Heart right ventricle (tissue), 16 donors: ENCODE measurements at regions of chr2 and their contacts with region 1.

Region 1: GRCh38 chr2:154623819-154624218 is 74.7 kb upstream of the KCNJ3 start:
- DNase-seq: peak in 1 of 2 donors; percentile 20
- ATAC-seq: peak in 2 of 8 donors; percentile 46 to 56
- H3K4me3 ChIP-seq: no peak overlapping the region
- H3K27ac ChIP-seq: no peak overlapping the region
- H3K4me1 ChIP-seq: peaks cover 0 to 5% (median 0%) of the 10 kb centered on the region in 9 donors
- H3K27me3 ChIP-seq: no peaks in the 10 kb centered on the region
- CTCF ChIP-seq: peak; percentile 38 to 77 (median 61)

Region 2: DNA sequence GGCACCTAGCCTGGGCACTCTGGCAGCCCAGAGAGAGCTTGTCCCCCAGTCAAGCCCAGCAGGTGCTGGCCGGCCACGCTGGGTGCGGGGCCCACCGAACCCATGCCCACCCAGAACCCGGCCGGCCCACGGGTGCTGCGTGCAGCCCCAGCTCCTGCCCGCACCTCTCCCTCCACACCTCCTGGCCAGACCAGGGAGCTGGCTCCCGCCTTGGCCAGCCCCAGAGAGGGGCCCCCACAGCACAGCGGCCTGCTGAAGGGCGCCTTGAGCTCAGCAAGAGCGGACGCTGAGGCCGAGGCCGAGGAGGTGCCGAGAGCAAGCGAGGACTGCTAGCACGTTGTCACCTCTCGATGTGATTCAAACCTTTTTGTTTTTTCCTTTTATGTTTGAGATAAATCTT is 332.3 kb before region 1 on chr2:
- intact Hi-C with region 1: no loop called
- DNase-seq: no peak
- ATAC-seq: peak in 1 of 8 donors; percentile 55
- H3K4me3 ChIP-seq: no peak overlapping the region
- H3K27ac ChIP-seq: no peak overlapping the region
- H3K4me1 ChIP-seq: no peaks in the 10 kb centered on the region
- H3K27me3 ChIP-seq: no peaks in the 10 kb centered on the region
- CTCF ChIP-seq: no peak

Region 3: DNA sequence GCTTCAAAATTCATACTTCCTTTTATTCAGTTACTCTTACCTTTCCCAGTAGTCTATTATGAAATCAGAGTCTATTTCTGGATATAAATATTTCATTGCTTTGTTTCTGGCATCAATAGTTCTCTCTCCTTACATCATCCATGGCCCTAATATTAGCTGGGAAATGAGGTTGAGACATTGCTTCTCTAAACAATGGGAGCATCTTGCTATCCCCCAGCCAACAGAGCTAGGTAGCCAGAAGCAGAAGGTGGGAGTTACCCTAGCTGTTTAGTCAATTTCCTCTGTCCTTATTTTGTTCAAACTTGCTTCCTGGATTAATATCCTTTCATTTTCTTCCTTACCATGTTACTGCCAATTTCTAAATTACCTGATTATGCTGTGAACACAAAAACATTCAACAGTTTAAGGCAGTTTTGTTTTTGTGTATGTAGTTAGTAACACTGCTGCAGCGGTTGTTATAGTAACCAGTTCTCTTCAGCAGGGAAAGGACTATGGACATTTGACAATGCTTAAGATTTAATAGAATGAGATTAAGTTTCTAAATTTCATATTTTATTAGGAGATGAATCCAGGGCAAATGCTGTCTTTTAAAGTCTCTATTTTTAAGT is 85.9 kb before region 1 on chr2:
- intact Hi-C with region 1: no loop called
- DNase-seq: peak in 1 of 2 donors; percentile 23
- ATAC-seq: peak; percentile 78 to 99 (median 96)
- H3K4me3 ChIP-seq: no peak overlapping the region
- H3K27ac ChIP-seq: peak overlapping the region in 6 of 10 donors; percentile 0 to 68 (median 46)
- H3K4me1 ChIP-seq: peaks cover 0 to 21% (median 6%) of the 10 kb centered on the region in 9 donors
- H3K27me3 ChIP-seq: no peaks in the 10 kb centered on the region
- CTCF ChIP-seq: no peak

Region 4: GRCh38 chr2:154686179-154686578 is 62.4 kb after region 1 on chr2:
- intact Hi-C with region 1: no loop called
- DNase-seq: no peak
- ATAC-seq: no peak
- H3K4me3 ChIP-seq: no peak overlapping the region
- H3K27ac ChIP-seq: no peak overlapping the region
- H3K4me1 ChIP-seq: no peaks in the 10 kb centered on the region
- H3K27me3 ChIP-seq: no peaks in the 10 kb centered on the region
- CTCF ChIP-seq: no peak

Region 5: DNA sequence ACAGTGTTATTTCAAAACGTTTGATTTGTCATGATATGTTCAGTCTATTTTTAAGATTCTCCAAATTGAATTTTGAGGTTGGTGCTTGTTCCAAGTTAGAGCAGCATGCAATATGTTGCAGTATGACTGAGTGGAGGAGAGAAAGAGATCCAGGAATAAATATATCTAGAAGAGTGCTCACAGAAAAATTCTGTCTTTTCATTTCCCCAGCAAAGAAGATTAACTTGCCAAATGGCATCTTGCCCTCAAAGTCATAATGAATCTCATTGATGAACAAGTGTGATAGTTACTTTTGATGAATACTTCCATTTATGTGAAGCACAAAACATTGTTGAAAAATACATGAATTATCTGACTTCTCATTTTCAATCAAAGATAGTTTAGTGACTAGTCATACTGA is 170.6 kb after region 1 on chr2:
- intact Hi-C with region 1: no loop called
- DNase-seq: no peak
- ATAC-seq: no peak
- H3K4me3 ChIP-seq: no peak overlapping the region
- H3K27ac ChIP-seq: no peak overlapping the region
- H3K4me1 ChIP-seq: no peaks in the 10 kb centered on the region
- H3K27me3 ChIP-seq: no peaks in the 10 kb centered on the region
- CTCF ChIP-seq: no peak

Region 6: DNA sequence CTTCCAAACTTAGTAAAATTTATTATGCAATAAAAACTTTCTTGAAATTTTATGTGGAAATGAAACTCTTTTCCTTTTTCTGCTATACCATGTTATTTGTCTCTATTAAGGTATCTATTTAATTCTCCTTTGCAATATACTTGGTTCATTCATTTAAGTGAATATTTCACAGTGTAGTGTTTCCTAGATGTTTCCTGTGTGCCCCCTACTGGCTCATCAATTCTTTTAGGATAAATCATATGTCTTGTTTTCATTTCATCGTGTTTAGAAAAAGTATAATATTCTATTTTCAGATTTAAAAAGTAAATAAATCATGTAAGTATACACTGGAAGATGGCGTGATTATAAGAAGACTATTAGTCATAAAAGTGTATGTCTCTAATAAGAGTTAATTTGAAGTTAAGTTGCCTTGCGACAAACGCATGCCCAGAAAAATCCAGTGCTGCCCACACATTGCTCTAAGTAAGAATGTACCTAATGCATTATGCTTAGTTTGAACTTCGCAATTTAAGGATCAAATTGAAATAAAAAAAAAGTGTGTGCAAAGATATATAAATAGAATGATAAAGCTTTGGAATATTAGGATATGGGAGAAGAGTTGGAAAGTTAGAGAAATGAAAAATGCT is 600.1 kb after region 1 on chr2:
- intact Hi-C with region 1: loop called in 3 of 10 experiments (anchors 10 kb)
- DNase-seq: no peak
- ATAC-seq: no peak
- H3K4me3 ChIP-seq: no peak overlapping the region
- H3K27ac ChIP-seq: no peak overlapping the region
- H3K4me1 ChIP-seq: no peaks in the 10 kb centered on the region
- H3K27me3 ChIP-seq: no peaks in the 10 kb centered on the region
- CTCF ChIP-seq: peak; percentile 25 to 69 (median 41)

Region 7: DNA sequence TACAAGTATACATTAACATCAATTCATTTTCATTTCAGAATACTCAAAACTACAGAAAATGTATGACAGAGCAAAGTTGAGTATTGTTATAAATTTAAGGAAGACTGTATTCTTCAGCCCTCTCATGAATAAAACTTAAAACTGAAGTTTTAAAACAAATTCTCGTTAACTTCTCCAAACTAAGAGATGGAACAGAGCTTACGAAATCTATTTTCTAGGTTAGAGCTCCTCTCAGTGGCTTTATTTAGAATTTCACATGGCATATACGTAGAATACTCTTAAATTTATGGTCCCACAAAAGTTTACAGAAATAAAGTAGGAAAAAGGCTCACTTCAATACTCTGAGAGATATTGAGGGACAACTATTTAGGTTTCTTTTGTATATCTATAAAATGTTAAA is 686.8 kb after region 1 on chr2:
- intact Hi-C with region 1: loop called in 2 of 10 experiments (anchors 5 to 10 kb)
- DNase-seq: no peak
- ATAC-seq: no peak
- H3K4me3 ChIP-seq: no peak overlapping the region
- H3K27ac ChIP-seq: no peak overlapping the region
- H3K4me1 ChIP-seq: no peaks in the 10 kb centered on the region
- H3K27me3 ChIP-seq: no peaks in the 10 kb centered on the region
- CTCF ChIP-seq: peak in 8 of 9 donors; percentile 8 to 58 (median 44)